Activated CD4-positive, alpha-beta T cell treated with anti-CD3 and anti-CD28 coated beads for 36 hours (primary cell): ENCODE measurements at regions of chr19 and their contacts with region 1.

Region 1: GRCh38 chr19:7326105-7326877 is 22.4 kb upstream of the ARHGEF18 start:
- DNase-seq: peak; percentile 71
- ATAC-seq: no peak
- H3K4me3 Mint-ChIP-seq: no peak overlapping the region
- H3K27ac Mint-ChIP-seq: no peak overlapping the region
- H3K4me1 Mint-ChIP-seq: no peaks in the 10 kb centered on the region
- H3K27me3 Mint-ChIP-seq: no peaks in the 10 kb centered on the region

Region 2: DNA sequence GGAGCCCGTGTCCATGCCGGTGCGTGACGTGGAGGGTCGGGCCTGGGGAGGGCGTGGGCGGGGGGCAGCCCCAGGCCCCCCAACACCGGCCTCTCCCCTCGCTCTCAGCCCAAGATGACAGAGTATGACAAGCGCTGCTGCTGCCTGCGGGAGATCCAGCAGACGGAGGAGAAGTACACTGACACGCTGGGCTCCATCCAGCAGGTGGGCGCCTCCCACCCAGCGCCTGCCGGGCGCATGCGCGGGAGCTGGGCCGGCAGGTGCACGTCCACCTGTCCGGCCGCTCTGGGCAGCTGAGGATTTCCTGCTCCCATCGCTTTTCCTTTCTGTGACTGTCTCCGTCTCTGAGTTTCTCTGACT is 504.0 kb before region 1 on chr19:
- CTCF ChIA-PET with region 1: no interaction called
- POLR2A ChIA-PET with region 1: no interaction called
- intact Hi-C with region 1: no loop called
- DNase-seq: no peak
- ATAC-seq: no peak
- H3K4me3 Mint-ChIP-seq: no peak overlapping the region
- H3K27ac Mint-ChIP-seq: no peak overlapping the region
- H3K4me1 Mint-ChIP-seq: peaks cover 5% of the 10 kb centered on the region
- H3K27me3 Mint-ChIP-seq: no peaks in the 10 kb centered on the region

Region 3: GRCh38 chr19:7145494-7146485 is 180.5 kb before region 1 on chr19:
- CTCF ChIA-PET with region 1: interaction called, 10 read pairs
- POLR2A ChIA-PET with region 1: interaction called, 3 read pairs
- intact Hi-C with region 1: loop called in 1 of 2 experiments (anchors 1 kb)
- DNase-seq: no peak
- ATAC-seq: no peak
- H3K4me3 Mint-ChIP-seq: no peak overlapping the region
- H3K27ac Mint-ChIP-seq: no peak overlapping the region
- H3K4me1 Mint-ChIP-seq: no peaks in the 10 kb centered on the region
- H3K27me3 Mint-ChIP-seq: no peaks in the 10 kb centered on the region